Activated CD4-positive, alpha-beta T cell treated with anti-CD3 and anti-CD28 coated beads for 36 hours (primary cell): ENCODE measurements at regions of chr16 and their contacts with region 1.

Region 1: GRCh38 chr16:30407102-30407803 is at the start of gene ZNF771:
- DNase-seq: peak; percentile 95
- ATAC-seq: peak; percentile 85
- H3K4me3 Mint-ChIP-seq: peak within 1 kb of the TSS; percentile 79
- H3K27ac Mint-ChIP-seq: peak within 1 kb of the TSS; percentile 97
- H3K4me1 Mint-ChIP-seq: peaks cover 26% of the 10 kb centered on the region
- H3K27me3 Mint-ChIP-seq: peaks cover 2% of the 10 kb centered on the region
- total RNA-seq, gene ZNF771: 3.8 to 4.0 TPM

Region 2: DNA sequence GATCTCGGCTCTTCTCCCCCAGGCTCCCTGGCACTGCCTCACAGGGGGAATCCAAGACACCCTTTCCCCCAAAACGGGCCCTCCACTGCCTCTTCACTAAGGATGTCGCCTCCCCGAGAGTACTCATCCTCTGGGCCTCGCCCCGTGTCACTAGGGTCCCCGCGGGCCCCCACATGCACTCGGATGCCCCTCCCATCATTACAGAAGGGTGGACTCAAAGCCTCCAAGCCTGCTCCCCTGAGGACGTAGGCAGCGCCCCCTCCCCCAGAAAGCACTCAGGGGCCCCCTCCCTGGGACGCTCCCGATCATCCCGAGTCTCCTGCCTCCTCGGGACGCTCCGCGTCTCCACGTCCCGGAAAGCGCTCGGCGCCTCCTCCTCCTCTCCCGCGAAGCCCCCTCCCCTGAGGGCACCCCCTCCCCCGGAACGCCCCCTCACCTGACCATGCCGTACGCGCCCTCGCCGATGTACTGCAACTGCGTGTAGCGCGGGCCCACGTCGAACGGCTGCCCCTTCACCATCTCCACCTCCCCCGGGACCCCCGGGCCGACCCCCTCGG is 284.6 kb before region 1 on chr16:
- CTCF ChIA-PET with region 1: no interaction called
- POLR2A ChIA-PET with region 1: no interaction called
- intact Hi-C with region 1: loop called (anchors 1 to 10 kb)
- DNase-seq: peak; percentile 35
- ATAC-seq: peak; percentile 37
- H3K4me3 Mint-ChIP-seq: peak overlapping the region; percentile 87
- H3K27ac Mint-ChIP-seq: peak overlapping the region; percentile 89
- H3K4me1 Mint-ChIP-seq: peaks cover 17% of the 10 kb centered on the region
- H3K27me3 Mint-ChIP-seq: no peaks in the 10 kb centered on the region

Region 3: DNA sequence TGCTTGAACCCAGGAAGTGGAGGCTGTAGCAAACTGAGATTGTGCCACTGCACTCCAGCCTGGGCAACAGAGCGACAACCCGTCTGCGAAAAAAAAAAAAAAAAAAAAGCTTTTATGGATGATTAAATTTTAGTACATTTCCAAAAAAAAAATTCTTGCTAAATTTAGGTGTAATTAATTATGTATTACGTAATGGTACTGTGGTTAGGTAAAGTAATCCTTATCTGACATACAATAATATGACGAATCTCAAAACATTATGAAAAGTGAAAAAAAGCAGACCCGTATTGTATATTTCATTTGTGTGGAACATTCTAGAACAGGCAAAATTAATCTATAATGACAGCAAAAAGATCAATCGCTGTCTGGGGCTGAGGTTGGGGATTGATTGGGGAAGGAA is 234.2 kb before region 1 on chr16:
- CTCF ChIA-PET with region 1: no interaction called
- POLR2A ChIA-PET with region 1: no interaction called
- intact Hi-C with region 1: no loop called
- DNase-seq: no peak
- ATAC-seq: no peak
- H3K4me3 Mint-ChIP-seq: no peak overlapping the region
- H3K27ac Mint-ChIP-seq: no peak overlapping the region
- H3K4me1 Mint-ChIP-seq: no peaks in the 10 kb centered on the region
- H3K27me3 Mint-ChIP-seq: no peaks in the 10 kb centered on the region

Region 4: DNA sequence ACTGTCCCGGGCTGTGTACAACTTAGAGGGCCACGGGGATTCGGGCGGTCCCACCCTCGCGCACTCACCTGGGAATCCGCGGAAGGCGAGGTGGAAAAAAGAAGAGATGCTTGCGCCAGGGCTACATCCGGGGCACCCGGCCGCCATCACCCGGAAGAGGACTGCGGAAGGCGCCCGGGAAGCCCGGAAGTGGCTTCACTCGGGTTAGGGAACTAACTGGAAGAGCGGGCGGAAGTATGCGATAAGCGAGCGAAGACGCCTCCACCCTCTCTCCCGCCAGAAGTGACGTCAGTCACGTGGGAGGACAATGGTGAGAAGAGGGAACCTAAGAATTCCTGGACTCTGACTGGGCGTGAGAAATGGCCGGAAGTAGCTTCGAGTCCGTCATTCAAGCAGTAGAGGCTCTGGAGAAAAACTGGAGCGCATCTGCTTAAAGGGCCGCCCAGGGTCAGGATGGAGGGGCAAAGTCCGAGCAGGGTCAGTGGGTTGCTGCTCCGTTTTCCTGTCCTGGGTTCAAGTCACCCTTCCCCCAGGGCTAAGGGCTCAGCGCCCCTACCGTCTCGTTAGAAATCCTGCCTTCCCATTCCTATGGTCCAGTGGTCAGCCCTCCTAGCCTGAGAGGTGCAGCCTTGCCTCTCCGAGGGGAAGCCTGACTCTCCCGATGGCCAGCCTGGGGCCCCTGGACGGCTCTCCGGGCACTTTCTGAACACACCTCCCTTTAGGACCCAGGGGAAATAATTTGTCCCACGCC is 51.9 kb before region 1 on chr16 and contains the start of gene CD2BP2:
- CTCF ChIA-PET with region 1: interaction called, 9 read pairs
- POLR2A ChIA-PET with region 1: no interaction called
- intact Hi-C with region 1: loop called in 1 of 2 experiments (anchors 1 kb)
- DNase-seq: peak; percentile 94
- ATAC-seq: peak; percentile 88
- H3K4me3 Mint-ChIP-seq: peak within 1 kb of the TSS; percentile 90
- H3K27ac Mint-ChIP-seq: peak within 1 kb of the TSS; percentile 94
- H3K4me1 Mint-ChIP-seq: peaks cover 32% of the 10 kb centered on the region
- H3K27me3 Mint-ChIP-seq: no peaks in the 10 kb centered on the region
- total RNA-seq, gene CD2BP2: 42.3 to 51.8 TPM

Region 5: GRCh38 chr16:30378236-30379204 is 28.7 kb before region 1 on chr16:
- CTCF ChIA-PET with region 1: interaction called, 5 read pairs
- POLR2A ChIA-PET with region 1: interaction called, 3 read pairs
- intact Hi-C with region 1: loop called (anchors 1 to 2 kb)
- DNase-seq: peak; percentile 100
- ATAC-seq: peak; percentile 87
- H3K4me3 Mint-ChIP-seq: peak overlapping the region; percentile 99
- H3K27ac Mint-ChIP-seq: peak overlapping the region; percentile 99
- H3K4me1 Mint-ChIP-seq: peaks cover 44% of the 10 kb centered on the region
- H3K27me3 Mint-ChIP-seq: no peaks in the 10 kb centered on the region

Region 6: GRCh38 chr16:30417529-30418349 is 10.5 kb after region 1 on chr16:
- CTCF ChIA-PET with region 1: interaction called, 14 read pairs
- POLR2A ChIA-PET with region 1: interaction called, 7 read pairs
- intact Hi-C with region 1: no loop called
- DNase-seq: peak; percentile 94
- ATAC-seq: peak; percentile 92
- H3K4me3 Mint-ChIP-seq: peak overlapping the region; percentile 49
- H3K27ac Mint-ChIP-seq: no peak overlapping the region
- H3K4me1 Mint-ChIP-seq: peaks cover 31% of the 10 kb centered on the region
- H3K27me3 Mint-ChIP-seq: no peaks in the 10 kb centered on the region

Region 7: DNA sequence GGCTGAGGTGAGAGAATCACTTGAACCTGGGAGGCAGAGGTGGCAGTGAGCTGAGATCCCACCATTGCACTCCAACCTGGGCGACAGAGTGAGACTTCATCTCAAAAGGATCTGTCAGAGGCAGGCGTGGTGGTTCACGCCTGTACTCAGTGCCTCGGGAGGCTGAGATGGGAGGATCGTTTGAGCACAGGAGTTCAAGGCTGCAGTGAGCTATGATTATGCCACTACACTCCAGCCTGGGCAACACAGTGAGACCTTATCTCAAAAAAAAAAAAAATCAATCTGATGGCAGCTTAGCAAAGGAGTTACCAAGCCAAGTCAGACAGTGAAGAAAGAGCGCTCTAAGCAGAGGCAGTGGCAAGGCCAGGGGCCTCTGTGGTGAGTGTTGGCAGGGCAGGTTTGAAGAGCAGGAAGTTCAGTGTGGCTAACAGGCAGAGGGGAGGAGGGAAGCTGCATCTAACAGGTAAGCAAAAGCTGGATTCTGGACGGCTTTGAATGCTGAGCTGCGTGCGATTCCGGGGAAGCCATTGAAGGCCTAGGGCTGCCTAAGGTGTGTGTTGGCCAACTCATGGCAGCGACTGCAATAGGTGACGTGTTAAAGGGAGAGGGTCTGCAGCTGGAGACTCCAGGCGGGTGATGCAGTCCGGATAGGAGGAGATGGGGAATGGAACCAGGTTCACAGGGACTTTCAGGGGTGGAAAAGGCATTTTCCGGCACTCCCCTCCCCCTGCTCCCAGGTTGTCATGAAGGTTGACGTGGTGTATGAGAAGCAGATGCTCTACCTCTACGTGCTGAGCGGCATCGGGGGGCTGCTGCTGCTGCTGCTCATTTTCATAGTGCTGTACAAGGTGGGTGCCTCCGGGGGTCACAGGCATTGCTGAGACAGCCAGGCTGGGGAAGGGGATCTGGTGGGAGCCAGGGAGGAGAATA is 112.1 kb after region 1 on chr16:
- CTCF ChIA-PET with region 1: no interaction called
- POLR2A ChIA-PET with region 1: no interaction called
- intact Hi-C with region 1: no loop called
- DNase-seq: no peak
- ATAC-seq: no peak
- H3K4me3 Mint-ChIP-seq: no peak overlapping the region
- H3K27ac Mint-ChIP-seq: no peak overlapping the region
- H3K4me1 Mint-ChIP-seq: no peaks in the 10 kb centered on the region
- H3K27me3 Mint-ChIP-seq: no peaks in the 10 kb centered on the region

Region 8: DNA sequence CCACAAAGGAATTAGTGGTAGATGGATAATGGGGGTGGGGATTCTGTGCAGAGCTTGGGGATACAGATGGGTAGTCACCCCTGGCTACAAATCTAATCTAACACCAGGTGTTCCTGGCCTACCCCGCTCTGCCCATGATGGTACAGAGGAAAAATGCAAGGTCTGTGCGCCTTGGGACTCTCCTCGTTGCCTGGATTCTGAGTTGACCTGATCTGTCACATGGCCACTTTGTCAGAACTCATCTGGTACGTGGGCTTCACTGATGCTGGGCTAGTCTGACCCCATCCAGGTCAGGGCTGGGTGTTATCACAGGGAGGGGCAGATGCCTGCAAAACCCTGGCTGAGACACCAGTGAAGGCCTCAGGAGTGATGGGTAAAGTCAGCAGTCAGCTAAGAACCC is 145.7 kb after region 1 on chr16:
- CTCF ChIA-PET with region 1: no interaction called
- POLR2A ChIA-PET with region 1: no interaction called
- intact Hi-C with region 1: no loop called
- DNase-seq: no peak
- ATAC-seq: no peak
- H3K4me3 Mint-ChIP-seq: no peak overlapping the region
- H3K27ac Mint-ChIP-seq: peak overlapping the region; percentile 91
- H3K4me1 Mint-ChIP-seq: peaks cover 61% of the 10 kb centered on the region
- H3K27me3 Mint-ChIP-seq: no peaks in the 10 kb centered on the region